ENCODE measurements at regions of chr10 and their contacts with region 1.

Region 1: DNA sequence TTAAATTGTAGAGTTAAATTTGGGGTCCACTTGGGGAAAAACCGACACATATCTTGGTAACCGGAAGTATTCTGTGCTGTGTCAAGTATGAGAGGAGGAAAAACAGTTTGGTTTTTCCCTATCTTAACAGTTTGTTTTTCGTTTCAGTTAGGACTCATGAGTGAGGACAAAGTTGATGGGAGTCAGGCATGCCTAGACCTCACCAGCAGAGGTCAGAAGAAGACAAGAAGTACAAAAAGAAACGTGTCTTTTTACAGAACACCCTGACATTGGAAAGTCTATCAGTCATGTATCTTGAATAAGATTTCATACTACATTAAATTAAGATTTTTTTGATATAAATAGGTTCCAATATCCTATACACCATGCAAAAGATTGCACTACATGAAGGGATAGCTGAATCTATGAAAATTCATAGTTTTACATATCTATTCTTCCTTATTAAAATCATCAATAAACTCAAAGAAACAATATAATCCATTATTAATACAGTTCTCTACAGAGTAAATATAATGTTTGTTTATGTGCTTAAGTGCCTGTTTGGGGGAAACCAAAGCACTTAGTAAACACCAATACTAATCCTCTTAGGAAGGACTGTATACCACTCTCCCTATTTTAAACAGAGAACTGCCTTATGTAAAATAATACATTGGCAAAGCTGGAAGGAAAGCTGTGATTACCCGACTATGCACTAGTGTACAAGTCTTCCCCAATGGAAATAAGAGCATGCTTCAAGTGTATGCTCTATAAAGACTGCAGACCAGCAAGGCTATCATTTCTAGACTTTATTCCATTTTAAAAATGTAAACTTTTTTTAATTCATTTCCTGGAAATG is 95.6 kb downstream of the USP6NL start:
- DNase-seq: peak in 3 of 10 donors; percentile 22 to 44 (median 34)

Region 2: DNA sequence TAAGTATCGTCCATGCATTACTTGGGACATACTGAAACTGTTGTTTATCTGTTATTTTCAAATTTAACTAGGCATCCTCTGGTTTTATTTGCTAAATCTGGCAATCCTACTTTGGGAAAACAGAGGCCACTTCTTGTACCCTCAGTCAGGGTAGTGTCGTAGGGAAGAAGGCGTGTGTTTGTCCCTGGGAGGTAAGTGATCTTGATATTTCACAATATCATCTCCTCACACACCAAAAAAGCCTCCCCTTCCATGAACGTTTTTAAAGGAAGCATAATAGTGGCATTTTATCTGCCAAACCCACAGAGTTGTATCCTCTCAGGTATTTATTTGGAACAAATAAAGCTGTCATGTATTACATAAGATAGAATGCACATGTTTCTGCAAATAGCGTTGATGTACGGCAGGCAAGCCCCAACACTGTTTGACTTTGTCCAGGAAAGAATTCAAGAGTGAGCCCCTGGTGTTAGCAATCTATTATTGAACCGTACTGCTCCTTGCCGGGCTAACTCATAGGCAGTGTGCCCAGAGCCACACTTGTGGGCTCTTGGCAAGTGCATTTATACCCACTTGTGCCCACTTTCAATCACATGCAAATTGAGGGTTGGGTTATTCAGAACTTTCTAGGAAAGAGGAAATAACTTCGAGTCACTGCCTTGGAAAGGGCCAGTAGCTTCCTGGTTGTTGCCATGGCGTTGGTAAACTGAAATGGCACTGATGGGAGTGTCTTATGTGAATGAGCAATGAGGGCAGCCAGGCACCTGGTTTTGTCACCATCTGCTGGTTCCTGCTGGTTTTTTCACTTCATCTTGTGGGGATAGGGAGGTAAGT is 170.4 kb before region 1 on chr10:
- intact Hi-C with region 1: no loop called
- DNase-seq: no peak

Region 3: GRCh38 chr10:11611248-11612020 is 95.6 kb after region 1 on chr10 and contains the start of gene USP6NL:
- intact Hi-C with region 1: loop called (anchors 10 kb)
- DNase-seq: peak; percentile 70 to 97 (median 80)

Region 4: DNA sequence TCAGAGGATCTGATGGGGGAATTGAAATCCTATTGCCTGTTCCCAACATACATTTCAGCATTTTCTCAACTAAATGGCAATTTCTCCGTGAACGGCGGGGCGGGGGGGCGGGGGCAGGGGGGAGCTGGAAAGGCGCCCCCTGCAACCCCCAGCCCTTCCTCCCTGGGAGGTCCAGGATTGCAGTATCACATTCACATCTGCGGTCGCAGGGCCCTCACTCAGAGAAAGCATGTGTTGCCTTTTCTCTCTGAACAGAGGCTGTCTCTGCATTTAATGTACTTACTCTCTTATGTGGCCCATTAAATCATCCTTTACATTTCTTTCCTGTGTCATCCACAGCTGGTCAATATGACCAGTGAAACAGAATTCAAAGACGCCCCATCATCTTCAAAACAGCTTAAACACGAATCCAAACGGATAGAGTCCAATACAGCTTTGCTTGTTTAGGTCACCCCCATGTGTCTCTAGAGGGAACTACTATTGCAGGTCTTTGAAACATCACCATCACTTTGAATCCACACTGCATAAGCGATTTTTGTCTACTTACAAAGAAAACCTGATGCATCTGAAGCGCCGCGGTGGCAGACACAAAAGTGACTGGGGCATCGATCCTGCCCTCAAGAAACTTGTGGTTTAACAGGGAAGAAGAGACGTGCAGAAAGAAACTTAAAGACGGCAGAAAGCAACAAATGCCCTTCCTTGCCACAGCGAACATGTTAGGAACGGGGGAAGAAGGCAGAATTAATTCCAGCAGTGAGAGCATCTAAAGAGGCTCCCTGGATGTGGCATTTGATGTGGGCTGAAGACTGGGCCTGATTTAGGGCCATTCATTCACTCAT is 209.3 kb after region 1 on chr10:
- intact Hi-C with region 1: loop called (anchors 1 kb)
- DNase-seq: peak in 1 of 10 donors; percentile 37

Region 5: DNA sequence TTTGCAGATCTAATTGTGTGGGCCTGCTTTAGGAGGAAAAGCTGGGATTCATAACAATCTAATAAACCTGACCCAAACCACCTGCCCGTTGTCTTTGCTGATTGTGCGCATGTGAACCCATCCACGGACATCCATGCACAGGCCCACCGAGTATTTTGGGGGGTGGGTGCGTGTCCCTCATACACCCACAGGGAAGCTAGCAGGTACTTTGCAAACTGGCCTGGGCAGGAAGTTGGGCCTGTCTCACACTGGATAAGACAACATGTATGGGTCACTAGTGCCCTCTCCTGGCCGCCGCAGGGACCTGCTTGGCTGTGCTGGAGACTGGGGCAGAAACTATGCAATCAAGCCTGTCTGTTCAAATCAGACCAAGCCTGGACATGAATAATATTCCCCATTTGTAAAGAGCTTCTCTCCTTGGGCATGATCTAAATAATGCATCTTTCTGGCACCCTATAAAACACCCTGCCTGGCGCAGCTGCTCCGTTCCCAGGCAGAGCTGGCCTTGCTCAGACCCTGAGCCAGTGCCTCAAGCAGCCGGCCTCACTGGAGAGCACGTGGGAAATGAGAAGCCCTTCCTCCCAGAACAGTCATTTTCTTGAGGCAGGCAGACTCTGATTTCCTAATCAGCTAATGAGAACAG is 242.1 kb after region 1 on chr10:
- intact Hi-C with region 1: loop called (anchors 1 kb)
- DNase-seq: peak; percentile 69 to 98 (median 89)